ENCODE measurements at regions of chr11 and their contacts with region 1.

Region 1: DNA sequence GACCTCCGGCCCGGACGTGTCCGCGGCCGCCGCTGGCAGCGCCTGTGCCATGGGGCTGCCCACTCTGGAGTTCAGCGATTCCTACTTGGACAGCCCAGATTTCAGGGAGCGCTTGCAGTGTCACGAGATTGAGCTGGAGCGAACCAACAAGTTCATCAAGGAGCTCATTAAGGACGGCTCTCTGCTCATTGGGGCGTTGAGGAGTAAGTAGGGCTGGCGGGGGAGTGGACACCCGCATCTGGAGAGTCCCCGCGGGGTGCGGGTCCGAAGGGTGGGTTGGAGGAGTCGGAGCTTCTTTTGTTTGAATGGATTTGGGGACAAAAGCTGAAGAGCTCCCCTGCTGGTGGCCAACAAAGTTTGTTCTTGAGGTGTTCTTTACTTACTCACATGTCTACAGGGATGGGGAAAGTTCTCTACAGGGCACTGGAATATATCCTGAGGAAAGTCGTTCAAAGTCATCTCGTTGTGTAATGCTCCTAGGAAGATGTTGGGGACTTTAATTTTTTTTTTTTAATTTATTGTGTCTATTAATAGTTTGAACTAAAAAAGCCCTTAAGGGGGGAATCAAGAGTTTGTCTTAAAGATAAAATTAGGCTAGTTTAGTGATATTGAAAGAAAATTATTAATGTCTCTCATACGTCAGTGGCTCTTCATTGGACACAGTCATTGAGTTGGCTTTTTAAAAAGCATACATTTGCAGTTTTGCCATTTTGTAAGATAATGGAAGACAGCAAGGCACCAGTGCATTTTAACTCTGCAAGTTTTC is 725 bp downstream of the ARHGAP42 start:
- DNase-seq: peak; percentile 85
- H3K4me3 ChIP-seq: peak overlapping the region; percentile 84 to 90 (median 89)
- H3K27ac ChIP-seq: peak overlapping the region; percentile 63
- H3K4me1 ChIP-seq: peaks cover 6% of the 10 kb centered on the region
- H3K27me3 ChIP-seq: no peaks in the 10 kb centered on the region
- CTCF ChIP-seq: peak; percentile 60 to 73
- POLR2A ChIP-seq: no peak

Region 2: GRCh38 chr11:100719809-100720221 is 32.0 kb after region 1 on chr11:
- CTCF ChIA-PET with region 1: interaction called, 5 read pairs
- POLR2A ChIA-PET with region 1: no interaction called
- dilution Hi-C with region 1: no loop called
- intact Hi-C with region 1: loop called (anchors 2 kb)
- DNase-seq: peak; percentile 96
- H3K4me3 ChIP-seq: no peak overlapping the region
- H3K27ac ChIP-seq: peak overlapping the region; percentile 9
- H3K4me1 ChIP-seq: peaks cover 10% of the 10 kb centered on the region
- H3K27me3 ChIP-seq: no peaks in the 10 kb centered on the region
- CTCF ChIP-seq: no peak
- POLR2A ChIP-seq: no peak

Region 3: DNA sequence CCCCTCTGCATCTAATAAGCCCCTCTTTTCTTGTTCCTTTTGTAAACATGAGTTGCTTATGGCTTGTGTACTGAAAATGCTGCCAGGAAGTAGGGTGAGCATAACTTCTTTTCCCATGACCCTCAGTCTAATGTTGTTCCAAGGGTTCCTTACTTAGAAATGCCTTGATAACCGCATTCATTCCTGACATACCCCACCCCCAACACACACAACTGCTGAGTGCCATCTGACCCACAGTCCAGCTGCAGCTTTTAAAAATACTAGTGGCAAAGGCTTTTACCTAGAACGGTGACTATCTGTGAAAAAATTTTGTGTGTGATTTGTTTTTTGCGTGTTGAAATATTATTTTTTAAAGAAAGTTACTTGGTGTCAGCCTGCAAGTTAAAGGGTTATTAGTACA is 51.9 kb after region 1 on chr11:
- CTCF ChIA-PET with region 1: interaction called, 4 read pairs
- POLR2A ChIA-PET with region 1: no interaction called
- dilution Hi-C with region 1: no loop called
- intact Hi-C with region 1: loop called (anchors 5 kb)
- DNase-seq: peak; percentile 88
- H3K4me3 ChIP-seq: no peak overlapping the region
- H3K27ac ChIP-seq: no peak overlapping the region
- H3K4me1 ChIP-seq: peaks cover 11% of the 10 kb centered on the region
- H3K27me3 ChIP-seq: no peaks in the 10 kb centered on the region
- CTCF ChIP-seq: no peak
- POLR2A ChIP-seq: no peak

Region 4: GRCh38 chr11:100827934-100828661 is 140.3 kb after region 1 on chr11:
- CTCF ChIA-PET with region 1: interaction called, 40 read pairs
- POLR2A ChIA-PET with region 1: no interaction called
- dilution Hi-C with region 1: no loop called
- intact Hi-C with region 1: loop called (anchors 1 kb)
- DNase-seq: peak; percentile 70
- H3K4me3 ChIP-seq: no peak overlapping the region
- H3K27ac ChIP-seq: no peak overlapping the region
- H3K4me1 ChIP-seq: no peaks in the 10 kb centered on the region
- H3K27me3 ChIP-seq: no peaks in the 10 kb centered on the region
- CTCF ChIP-seq: peak; percentile 33 to 48
- POLR2A ChIP-seq: no peak

Region 5: GRCh38 chr11:100855466-100856067 is 167.8 kb after region 1 on chr11:
- CTCF ChIA-PET with region 1: interaction called, 13 read pairs
- POLR2A ChIA-PET with region 1: no interaction called
- dilution Hi-C with region 1: no loop called
- intact Hi-C with region 1: loop called (anchors 1 kb)
- DNase-seq: peak; percentile 61
- H3K4me3 ChIP-seq: no peak overlapping the region
- H3K27ac ChIP-seq: no peak overlapping the region
- H3K4me1 ChIP-seq: no peaks in the 10 kb centered on the region
- H3K27me3 ChIP-seq: no peaks in the 10 kb centered on the region
- CTCF ChIP-seq: peak; percentile 36 to 41
- POLR2A ChIP-seq: no peak

Region 6: DNA sequence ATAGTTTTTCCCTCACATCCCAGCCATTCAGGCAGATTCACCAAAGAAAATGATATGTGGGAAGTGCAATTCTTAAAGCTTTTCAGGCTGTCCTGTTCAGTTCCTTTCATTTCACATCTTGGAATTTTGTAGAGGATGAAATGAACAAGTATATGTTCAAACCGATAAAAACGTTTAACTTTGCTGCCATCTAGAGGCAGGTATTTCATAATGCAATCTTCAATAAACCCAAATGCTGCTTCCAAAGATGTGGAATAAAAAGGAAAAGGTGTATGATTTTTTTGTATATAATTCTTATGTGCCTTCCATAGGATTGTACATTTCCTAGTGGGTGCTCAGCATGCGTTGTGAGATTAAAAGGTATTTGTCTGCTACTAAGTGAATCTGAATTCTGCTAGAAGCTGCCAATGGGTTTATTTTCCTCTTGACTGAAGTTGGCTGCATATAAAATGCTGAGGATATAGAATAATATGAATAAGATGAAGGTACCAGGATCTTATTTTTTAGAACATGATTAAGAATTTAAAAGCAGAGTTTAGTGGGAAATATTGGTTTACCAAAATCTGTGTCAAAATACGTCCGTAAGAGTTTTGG is 242.5 kb after region 1 on chr11:
- CTCF ChIA-PET with region 1: interaction called, 11 read pairs
- POLR2A ChIA-PET with region 1: no interaction called
- dilution Hi-C with region 1: no loop called
- intact Hi-C with region 1: no loop called
- DNase-seq: peak; percentile 64
- H3K4me3 ChIP-seq: no peak overlapping the region
- H3K27ac ChIP-seq: no peak overlapping the region
- H3K4me1 ChIP-seq: peaks cover 4% of the 10 kb centered on the region
- H3K27me3 ChIP-seq: no peaks in the 10 kb centered on the region
- CTCF ChIP-seq: peak; percentile 44 to 49
- POLR2A ChIP-seq: no peak

Measured in endothelial cell of umbilical vein (primary cell).